Activated CD4-positive, alpha-beta T cell treated with anti-CD3 and anti-CD28 coated beads, Interleukin-2, amount 10 ng/mL, durations not matched to agents 24 days and 14 days (primary cell): ENCODE measurements at regions of chr11 and their contacts with region 1.

Region 1: DNA sequence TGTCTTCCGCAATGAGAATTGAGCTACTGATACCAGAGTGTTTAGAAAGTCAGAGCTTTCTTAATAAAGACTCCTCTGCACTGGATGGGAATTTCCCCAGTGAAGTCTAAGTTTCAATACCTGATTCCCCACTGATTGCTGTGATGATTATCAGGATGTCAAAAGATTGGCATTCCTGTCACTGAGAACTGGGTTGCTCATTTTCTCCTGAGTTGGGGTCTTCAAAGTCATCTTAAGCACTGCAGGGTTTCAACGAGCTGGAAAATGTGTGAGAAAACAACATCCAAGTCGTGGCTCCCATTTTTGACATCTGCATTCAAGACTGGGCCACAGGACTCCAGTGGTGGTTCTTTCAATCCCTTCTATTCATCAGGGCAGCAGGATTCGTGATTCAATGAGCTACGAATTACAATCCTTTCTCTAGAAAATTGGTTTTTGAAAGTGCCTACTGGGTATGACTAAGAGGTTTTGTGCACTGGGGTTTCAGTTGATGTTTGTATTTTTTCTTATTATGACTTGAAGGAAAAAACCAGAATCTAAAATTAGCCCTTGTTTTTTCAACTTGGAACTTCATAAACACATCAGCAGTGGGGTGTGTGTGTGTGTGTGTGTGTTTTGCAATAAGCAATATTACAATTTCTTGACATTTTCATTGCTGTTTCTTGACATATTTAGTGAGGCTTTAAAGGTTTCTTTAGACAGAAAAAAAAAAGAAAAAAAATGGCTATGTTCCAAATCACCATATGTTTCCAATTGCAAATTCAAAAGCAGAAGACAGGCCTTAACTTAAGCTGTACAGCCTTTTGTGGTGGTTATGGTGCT is 233.0 kb downstream of the FAM76B start:
- DNase-seq: peak; percentile 70
- H3K4me3 Mint-ChIP-seq: peak overlapping the region; percentile 66
- H3K27ac Mint-ChIP-seq: peak overlapping the region; percentile 87
- H3K4me1 Mint-ChIP-seq: peaks cover 42% of the 10 kb centered on the region
- H3K27me3 Mint-ChIP-seq: no peaks in the 10 kb centered on the region

Region 2: DNA sequence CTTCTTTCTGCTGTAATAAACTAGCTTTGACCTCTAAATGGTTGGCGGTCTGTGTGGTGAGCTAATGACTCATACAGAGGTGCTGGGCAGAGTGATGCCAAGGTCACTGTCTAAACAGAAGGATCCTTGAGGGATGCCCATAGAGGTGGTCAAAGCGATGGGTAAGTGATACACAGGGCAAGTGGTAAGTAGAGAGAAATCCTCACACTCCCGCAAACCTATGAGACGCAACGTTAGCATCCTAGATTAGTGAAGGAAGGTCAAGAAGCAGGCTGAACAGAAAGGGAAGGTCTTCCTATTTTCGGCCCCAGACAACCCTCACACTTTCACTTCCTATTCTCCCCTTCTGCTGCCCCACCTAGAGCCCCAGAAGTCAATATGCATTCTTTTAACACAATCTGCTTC is 259.9 kb before region 1 on chr11:
- intact Hi-C with region 1: loop called (anchors 1 kb)
- DNase-seq: no peak
- H3K4me3 Mint-ChIP-seq: no peak overlapping the region
- H3K27ac Mint-ChIP-seq: no peak overlapping the region
- H3K4me1 Mint-ChIP-seq: peaks cover 33% of the 10 kb centered on the region
- H3K27me3 Mint-ChIP-seq: peaks cover 4% of the 10 kb centered on the region

Region 3: DNA sequence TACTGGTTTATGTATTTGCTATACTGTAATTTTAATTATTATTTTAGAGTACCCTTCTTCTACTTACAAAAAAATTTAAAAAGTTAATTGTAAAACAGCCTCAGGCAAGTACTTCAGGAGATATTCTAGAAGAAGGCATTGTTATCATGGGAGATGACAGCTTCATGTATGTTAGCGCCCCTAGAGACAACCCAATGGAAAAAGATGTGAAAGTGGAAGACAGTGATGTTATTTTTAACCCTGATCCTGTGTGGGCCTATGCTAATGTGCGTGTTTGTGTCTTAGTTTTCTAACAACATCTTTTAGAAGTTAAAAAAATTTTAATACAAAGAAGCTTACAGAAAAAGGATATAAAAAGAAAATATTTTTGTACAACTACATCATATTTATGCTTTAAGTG is 28.0 kb after region 1 on chr11:
- intact Hi-C with region 1: loop called (anchors 1 kb)
- DNase-seq: peak; percentile 32
- H3K4me3 Mint-ChIP-seq: no peak overlapping the region
- H3K27ac Mint-ChIP-seq: no peak overlapping the region
- H3K4me1 Mint-ChIP-seq: peaks cover 20% of the 10 kb centered on the region
- H3K27me3 Mint-ChIP-seq: no peaks in the 10 kb centered on the region

Region 4: GRCh38 chr11:95674657-95675358 is 118.3 kb after region 1 on chr11:
- intact Hi-C with region 1: loop called (anchors 1 kb)
- DNase-seq: no peak
- H3K4me3 Mint-ChIP-seq: no peak overlapping the region
- H3K27ac Mint-ChIP-seq: peak overlapping the region; percentile 87
- H3K4me1 Mint-ChIP-seq: peaks cover 41% of the 10 kb centered on the region
- H3K27me3 Mint-ChIP-seq: no peaks in the 10 kb centered on the region

Region 5: DNA sequence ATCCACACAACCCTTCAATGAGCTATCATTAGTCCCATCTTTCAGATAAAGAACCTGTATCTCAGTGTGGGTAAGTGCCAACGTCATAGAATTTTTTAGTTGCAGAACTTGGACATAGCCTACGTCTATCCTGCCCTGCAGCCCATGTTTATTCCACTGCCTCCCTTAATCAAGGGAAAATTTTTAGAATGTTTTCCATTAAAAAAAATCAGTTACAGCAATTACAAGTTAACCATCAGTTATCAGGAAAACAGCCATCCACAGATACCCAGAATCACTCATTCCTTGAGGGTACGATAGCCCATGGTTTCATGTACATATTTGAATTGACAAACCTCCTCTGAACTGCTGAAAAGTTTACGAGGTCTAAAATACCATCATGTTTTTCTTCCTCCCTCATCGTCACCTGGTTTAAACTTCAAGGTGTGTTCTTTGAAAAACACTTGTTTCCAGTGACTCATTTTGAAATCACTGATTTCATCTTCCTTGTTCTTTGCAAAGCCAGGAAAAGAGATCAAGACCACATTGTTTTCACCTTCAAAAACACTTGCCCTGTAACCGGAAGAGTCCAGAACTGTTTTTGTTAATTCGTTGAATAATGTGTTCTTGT is 132.1 kb after region 1 on chr11:
- intact Hi-C with region 1: loop called (anchors 1 kb)
- DNase-seq: peak; percentile 83
- H3K4me3 Mint-ChIP-seq: no peak overlapping the region
- H3K27ac Mint-ChIP-seq: no peak overlapping the region
- H3K4me1 Mint-ChIP-seq: peaks cover 27% of the 10 kb centered on the region
- H3K27me3 Mint-ChIP-seq: no peaks in the 10 kb centered on the region

Region 6: GRCh38 chr11:95705485-95706124 is 149.1 kb after region 1 on chr11:
- intact Hi-C with region 1: loop called (anchors 1 kb)
- DNase-seq: peak; percentile 96
- H3K4me3 Mint-ChIP-seq: no peak overlapping the region
- H3K27ac Mint-ChIP-seq: no peak overlapping the region
- H3K4me1 Mint-ChIP-seq: peaks cover 17% of the 10 kb centered on the region
- H3K27me3 Mint-ChIP-seq: no peaks in the 10 kb centered on the region

Region 7: GRCh38 chr11:95917193-95918036 is 360.9 kb after region 1 on chr11:
- intact Hi-C with region 1: no loop called
- DNase-seq: no peak
- H3K4me3 Mint-ChIP-seq: no peak overlapping the region
- H3K27ac Mint-ChIP-seq: no peak overlapping the region
- H3K4me1 Mint-ChIP-seq: peaks cover 16% of the 10 kb centered on the region
- H3K27me3 Mint-ChIP-seq: no peaks in the 10 kb centered on the region